ENCODE measurements at regions of chr16 and their contacts with region 1.

Region 1: GRCh38 chr16:68470461-68471150 is 22.3 kb upstream of the SMPD3 start:
- DNase-seq: peak in 6 of 35 experiments; percentile 6 to 46 (median 16)
- ATAC-seq: peak; percentile 52 to 67 (median 56)
- H3K4me3 ChIP-seq: peak overlapping the region; percentile 44 to 76
- H3K4me3 Mint-ChIP-seq: peak overlapping the region; percentile 66 to 91 (median 81)
- H3K27ac ChIP-seq: peak overlapping the region; percentile 68
- H3K27ac Mint-ChIP-seq: peak overlapping the region; percentile 76 to 89
- H3K4me1 ChIP-seq: peaks cover 32 to 36% of the 10 kb centered on the region in 2 experiments
- H3K4me1 Mint-ChIP-seq: peaks cover 45 to 53% (median 47%) of the 10 kb centered on the region in 3 donors
- H3K27me3 ChIP-seq: no peaks in the 10 kb centered on the region
- H3K27me3 Mint-ChIP-seq: no peaks in the 10 kb centered on the region

Region 2: DNA sequence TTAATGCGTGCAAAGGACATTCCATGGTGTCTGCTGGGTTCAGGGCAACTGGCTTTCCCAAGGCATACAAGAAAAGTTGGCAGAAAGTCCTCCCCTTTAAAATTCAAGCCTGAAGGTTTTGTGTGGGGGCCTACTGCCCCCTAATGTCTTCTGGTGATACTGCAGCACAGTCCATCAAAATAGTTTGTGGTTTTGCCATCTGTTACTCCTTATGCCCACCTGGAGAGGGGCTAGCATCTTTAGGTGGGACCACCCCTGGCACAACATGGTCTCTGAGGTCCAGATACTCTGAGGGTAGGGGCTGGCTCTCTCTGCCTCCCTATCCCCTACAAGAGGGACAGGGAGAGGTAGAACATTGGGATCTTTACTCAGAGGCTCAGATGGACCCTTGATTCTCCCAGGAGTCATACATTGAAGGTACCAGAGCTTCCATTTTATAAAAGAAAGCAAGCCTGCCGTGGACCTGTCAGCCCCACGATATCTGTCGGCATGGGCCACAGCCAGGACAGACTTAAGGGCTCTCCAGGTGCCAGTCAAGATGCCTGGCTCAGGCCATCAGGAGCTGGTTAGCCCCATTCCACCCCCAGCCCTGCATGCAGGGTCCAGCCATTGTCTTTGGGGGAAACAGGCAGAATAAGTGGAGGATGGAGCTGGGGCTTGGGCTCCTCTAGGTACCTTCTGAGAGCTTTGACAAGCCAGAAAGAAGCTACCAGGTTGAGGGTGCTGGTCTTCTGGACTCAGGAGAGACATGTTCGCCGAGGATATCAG is 241.0 kb before region 1 on chr16:
- CTCF ChIA-PET with region 1: interaction called in 1 of 2 experiments, 10 read pairs
- POLR2A ChIA-PET with region 1: no interaction called
- DNase-seq: peak in 17 of 35 experiments; percentile 33 to 71 (median 45)
- ATAC-seq: peak in 3 of 4 experiments; percentile 26 to 37 (median 30)
- H3K4me3 ChIP-seq: no peak overlapping the region
- H3K4me3 Mint-ChIP-seq: no peak overlapping the region
- H3K27ac ChIP-seq: no peak overlapping the region
- H3K27ac Mint-ChIP-seq: peak overlapping the region; percentile 66 to 72
- H3K4me1 ChIP-seq: peaks cover 16 to 24% of the 10 kb centered on the region in 2 experiments
- H3K4me1 Mint-ChIP-seq: peaks cover 43 to 48% (median 48%) of the 10 kb centered on the region in 3 donors
- H3K27me3 ChIP-seq: no peaks in the 10 kb centered on the region
- H3K27me3 Mint-ChIP-seq: no peaks in the 10 kb centered on the region

Region 3: GRCh38 chr16:68345351-68345810 is 125.2 kb before region 1 on chr16:
- CTCF ChIA-PET with region 1: no interaction called
- POLR2A ChIA-PET with region 1: no interaction called
- DNase-seq: no peak
- ATAC-seq: peak in 3 of 4 experiments; percentile 48 to 55 (median 51)
- H3K4me3 ChIP-seq: no peak overlapping the region
- H3K4me3 Mint-ChIP-seq: no peak overlapping the region
- H3K27ac ChIP-seq: no peak overlapping the region
- H3K27ac Mint-ChIP-seq: no peak overlapping the region
- H3K4me1 ChIP-seq: peaks cover 0 to 2% of the 10 kb centered on the region in 2 experiments
- H3K4me1 Mint-ChIP-seq: peaks cover 3 to 20% (median 14%) of the 10 kb centered on the region in 3 donors
- H3K27me3 ChIP-seq: no peaks in the 10 kb centered on the region
- H3K27me3 Mint-ChIP-seq: no peaks in the 10 kb centered on the region

Region 4: GRCh38 chr16:69310653-69311532 is 840.3 kb after region 1 on chr16 and contains the start of gene VPS4A:
- CTCF ChIA-PET with region 1: interaction called in 1 of 2 experiments, 10 read pairs
- POLR2A ChIA-PET with region 1: no interaction called
- DNase-seq: peak; percentile 92 to 98 (median 96)
- ATAC-seq: peak; percentile 92 to 99 (median 94)
- H3K4me3 ChIP-seq: peak within 1 kb of the TSS; percentile 38 to 67
- H3K4me3 Mint-ChIP-seq: peak within 1 kb of the TSS; percentile 98
- H3K27ac ChIP-seq: peak within 1 kb of the TSS; percentile 73
- H3K27ac Mint-ChIP-seq: peak within 1 kb of the TSS; percentile 95
- H3K4me1 ChIP-seq: peaks cover 4 to 36% of the 10 kb centered on the region in 2 experiments
- H3K4me1 Mint-ChIP-seq: peaks cover 31 to 35% (median 32%) of the 10 kb centered on the region in 3 donors
- H3K27me3 ChIP-seq: no peaks in the 10 kb centered on the region
- H3K27me3 Mint-ChIP-seq: no peaks in the 10 kb centered on the region
- total RNA-seq, gene VPS4A: 40.5 to 61.9 (median 55.9) TPM

Measured in T-cell (primary cell).